HCT116 (cell line): ENCODE measurements at regions of chr6 and their contacts with region 1.

Region 1: GRCh38 chr6:101393251-101393828 is at the start of gene GRIK2:
- DNase-seq: no peak
- ATAC-seq: peak; percentile 87
- H3K4me3 ChIP-seq: peak within 1 kb of the TSS; percentile 47 to 61
- H3K27ac ChIP-seq: no peak within 1 kb of the TSS
- H3K4me1 ChIP-seq: peaks cover 0 to 11% of the 10 kb centered on the region in 2 experiments; a peak in 3 of 4 replicates
- H3K27me3 ChIP-seq: 0 out of 2 replicates have a peak, but pooled peaks cover 6% of the 10 kb centered on the region
- CTCF ChIP-seq: peak in 2 of 3 experiments; percentile 28 to 29; a peak in 4 of 6 replicates
- POLR2A ChIP-seq: no peak
- RAD21 ChIP-seq: no peak
- total RNA-seq, gene GRIK2: 0.64 TPM

Region 2: DNA sequence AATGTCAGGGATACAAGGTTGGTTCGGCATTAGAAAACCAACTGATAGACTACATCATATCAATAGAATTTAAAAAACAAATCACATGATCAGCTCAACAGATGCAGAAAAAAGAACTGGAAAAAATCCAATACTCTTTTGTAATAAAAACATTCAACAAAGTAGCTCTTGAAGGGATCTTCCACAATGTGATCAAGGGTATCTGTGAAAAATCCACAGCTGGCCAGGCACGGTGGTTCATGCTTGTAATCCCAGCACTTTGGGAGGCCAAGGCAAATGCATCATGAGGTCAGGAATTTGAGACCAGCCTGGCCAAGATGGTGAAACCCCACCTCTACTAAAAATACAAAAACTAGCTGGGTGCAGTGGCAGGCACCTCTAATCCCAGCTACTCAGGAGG is 575.3 kb before region 1 on chr6:
- CTCF ChIA-PET with region 1: no interaction called
- POLR2A ChIA-PET with region 1: no interaction called
- RAD21 ChIA-PET with region 1: no interaction called
- intact Hi-C with region 1: no loop called
- DNase-seq: no peak
- ATAC-seq: no peak
- H3K4me3 ChIP-seq: no peak overlapping the region
- H3K27ac ChIP-seq: no peak overlapping the region
- H3K4me1 ChIP-seq: no peaks in the 10 kb centered on the region
- H3K27me3 ChIP-seq: no peaks in the 10 kb centered on the region
- CTCF ChIP-seq: no peak
- POLR2A ChIP-seq: no peak
- RAD21 ChIP-seq: no peak

Region 3: DNA sequence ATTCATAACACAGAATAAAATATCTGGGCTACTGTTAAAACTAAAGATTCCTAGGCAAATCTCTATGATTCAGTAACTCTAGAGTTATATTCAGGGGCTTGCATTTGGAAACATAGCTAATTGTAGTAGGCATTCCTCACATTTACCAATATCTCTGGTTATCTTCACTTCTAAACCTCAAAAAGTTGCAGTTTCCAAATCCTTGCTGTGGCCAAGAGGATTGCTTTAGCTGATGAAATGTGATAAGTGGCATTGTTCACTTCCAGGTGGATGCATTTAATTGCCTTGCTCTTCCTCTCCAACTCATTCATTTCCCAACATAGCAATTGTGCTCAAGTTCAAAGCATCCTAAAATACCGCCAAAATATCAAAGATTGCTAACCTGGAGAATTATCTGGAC is 246.8 kb after region 1 on chr6:
- CTCF ChIA-PET with region 1: no interaction called
- POLR2A ChIA-PET with region 1: no interaction called
- RAD21 ChIA-PET with region 1: no interaction called
- intact Hi-C with region 1: loop called (anchors 10 kb)
- DNase-seq: no peak
- ATAC-seq: no peak
- H3K4me3 ChIP-seq: no peak overlapping the region
- H3K27ac ChIP-seq: no peak overlapping the region
- H3K4me1 ChIP-seq: peaks cover 0 to 5% of the 10 kb centered on the region in 2 experiments; a peak in 1 of 4 replicates
- H3K27me3 ChIP-seq: no peaks in the 10 kb centered on the region
- CTCF ChIP-seq: no peak
- POLR2A ChIP-seq: no peak
- RAD21 ChIP-seq: no peak

Region 4: GRCh38 chr6:101779051-101779844 is 385.9 kb after region 1 on chr6:
- CTCF ChIA-PET with region 1: no interaction called
- POLR2A ChIA-PET with region 1: no interaction called
- RAD21 ChIA-PET with region 1: no interaction called
- intact Hi-C with region 1: loop called (anchors 10 kb)
- DNase-seq: no peak
- ATAC-seq: no peak
- H3K4me3 ChIP-seq: no peak overlapping the region
- H3K27ac ChIP-seq: no peak overlapping the region
- H3K4me1 ChIP-seq: no peaks in the 10 kb centered on the region
- H3K27me3 ChIP-seq: no peaks in the 10 kb centered on the region
- CTCF ChIP-seq: no peak
- POLR2A ChIP-seq: no peak
- RAD21 ChIP-seq: no peak

Region 5: GRCh38 chr6:102619585-102619984 is 1226.2 kb after region 1 on chr6:
- CTCF ChIA-PET with region 1: no interaction called
- POLR2A ChIA-PET with region 1: no interaction called
- RAD21 ChIA-PET with region 1: no interaction called
- intact Hi-C with region 1: loop called (anchors 5 kb)
- DNase-seq: peak; percentile 1
- ATAC-seq: peak; percentile 69
- H3K4me3 ChIP-seq: no peak overlapping the region
- H3K27ac ChIP-seq: no peak overlapping the region
- H3K4me1 ChIP-seq: no peaks in the 10 kb centered on the region
- H3K27me3 ChIP-seq: no peaks in the 10 kb centered on the region
- CTCF ChIP-seq: peak; percentile 47 to 77 (median 56); a peak in 5 of 6 replicates
- POLR2A ChIP-seq: no peak
- RAD21 ChIP-seq: peak; percentile 73

Region 6: GRCh38 chr6:103122766-103123601 is 1729.6 kb after region 1 on chr6:
- CTCF ChIA-PET with region 1: no interaction called
- POLR2A ChIA-PET with region 1: no interaction called
- RAD21 ChIA-PET with region 1: no interaction called
- intact Hi-C with region 1: loop called (anchors 1 kb)
- DNase-seq: peak; percentile 69
- ATAC-seq: peak; percentile 98
- H3K4me3 ChIP-seq: no peak overlapping the region
- H3K27ac ChIP-seq: no peak overlapping the region
- H3K4me1 ChIP-seq: peaks cover 0 to 3% of the 10 kb centered on the region in 2 experiments; a peak in 1 of 4 replicates
- H3K27me3 ChIP-seq: no peaks in the 10 kb centered on the region
- CTCF ChIP-seq: peak; percentile 50 to 76 (median 65); a peak in 5 of 6 replicates
- POLR2A ChIP-seq: no peak
- RAD21 ChIP-seq: peak; percentile 86